CD8-positive, alpha-beta T cell (primary cell): ENCODE measurements at regions of chr7 and their contacts with region 1.

Region 1: DNA sequence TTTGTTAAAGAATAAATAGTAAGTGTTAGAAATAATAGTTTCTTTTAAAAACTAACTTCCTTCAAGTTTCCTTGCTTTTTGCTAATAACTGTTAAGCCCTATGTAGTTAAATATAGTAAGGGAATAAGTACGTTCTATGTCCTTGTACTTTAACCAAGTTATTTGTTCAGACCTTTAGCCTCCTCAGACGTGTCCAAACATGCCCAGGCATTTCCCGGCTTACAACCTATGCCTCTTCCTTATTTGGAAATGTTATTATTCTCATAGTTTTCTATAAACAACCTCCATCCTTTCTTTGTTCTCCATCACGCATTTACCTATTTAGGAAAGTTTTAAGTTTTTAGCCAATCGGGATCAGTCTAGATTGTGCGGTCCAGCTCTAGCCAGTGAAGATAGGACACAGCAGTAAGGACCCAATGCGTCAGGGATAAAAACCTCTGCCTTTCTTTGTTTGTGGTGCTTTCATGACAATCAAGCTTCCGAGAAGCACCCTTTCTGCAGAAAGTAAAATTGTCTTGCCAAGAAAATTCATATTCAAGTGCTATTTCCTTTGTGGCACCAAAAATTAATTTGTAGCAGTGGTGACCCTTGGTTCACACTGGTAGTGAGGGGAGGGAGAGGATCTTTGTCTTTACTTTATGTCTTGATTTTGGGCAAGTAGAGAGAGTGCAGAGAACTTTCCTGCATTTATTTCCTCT is 851.3 kb upstream of the POM121L12 start:
- DNase-seq: no peak
- ATAC-seq: no peak
- H3K4me3 ChIP-seq: no peak overlapping the region
- H3K4me3 Mint-ChIP-seq: no peak overlapping the region
- H3K27ac ChIP-seq: no peak overlapping the region
- H3K27ac Mint-ChIP-seq: no peak overlapping the region
- H3K4me1 ChIP-seq: no peaks in the 10 kb centered on the region
- H3K4me1 Mint-ChIP-seq: no peaks in the 10 kb centered on the region
- H3K27me3 ChIP-seq: no peaks in the 10 kb centered on the region
- H3K27me3 Mint-ChIP-seq: no peaks in the 10 kb centered on the region
- CTCF ChIP-seq: no peak

Region 2: GRCh38 chr7:52257890-52258289 is 73.7 kb after region 1 on chr7:
- CTCF ChIA-PET with region 1: no interaction called
- POLR2A ChIA-PET with region 1: no interaction called
- intact Hi-C with region 1: loop called in 1 of 2 experiments (anchors 2 kb)
- DNase-seq: no peak
- ATAC-seq: no peak
- H3K4me3 ChIP-seq: no peak overlapping the region
- H3K4me3 Mint-ChIP-seq: no peak overlapping the region
- H3K27ac ChIP-seq: no peak overlapping the region
- H3K27ac Mint-ChIP-seq: no peak overlapping the region
- H3K4me1 ChIP-seq: no peaks in the 10 kb centered on the region
- H3K4me1 Mint-ChIP-seq: no peaks in the 10 kb centered on the region
- H3K27me3 ChIP-seq: no peaks in the 10 kb centered on the region
- H3K27me3 Mint-ChIP-seq: no peaks in the 10 kb centered on the region
- CTCF ChIP-seq: no peak